Activated CD4-positive, alpha-beta T cell treated with anti-CD3 and anti-CD28 coated beads, Interleukin-2, amount 10 ng/mL, durations not matched to agents 7 days and 5 days (primary cell): ENCODE measurements at regions of chr19 and their contacts with region 1.

Region 1: GRCh38 chr19:19865739-19866481 is at the start of gene ZNF253:
- DNase-seq: peak; percentile 98
- H3K4me3 Mint-ChIP-seq: peak within 1 kb of the TSS; percentile 100
- H3K27ac Mint-ChIP-seq: peak within 1 kb of the TSS; percentile 100
- H3K4me1 Mint-ChIP-seq: peaks cover 29% of the 10 kb centered on the region
- H3K27me3 Mint-ChIP-seq: no peaks in the 10 kb centered on the region
- total RNA-seq, gene ZNF253: 19.8 to 22.5 TPM

Region 2: GRCh38 chr19:19821366-19821951 is 44.5 kb before region 1 on chr19 and contains the start of gene ZNF506:
- CTCF ChIA-PET with region 1: interaction called, 4 read pairs
- POLR2A ChIA-PET with region 1: interaction called, 10 read pairs
- DNase-seq: peak; percentile 97
- H3K4me3 Mint-ChIP-seq: peak within 1 kb of the TSS; percentile 100
- H3K27ac Mint-ChIP-seq: peak within 1 kb of the TSS; percentile 99
- H3K4me1 Mint-ChIP-seq: peaks cover 38% of the 10 kb centered on the region
- H3K27me3 Mint-ChIP-seq: no peaks in the 10 kb centered on the region
- total RNA-seq, gene ZNF506: 23.0 to 26.7 TPM